ENCODE measurements at regions of chr20 and their contacts with region 1.

Region 1: DNA sequence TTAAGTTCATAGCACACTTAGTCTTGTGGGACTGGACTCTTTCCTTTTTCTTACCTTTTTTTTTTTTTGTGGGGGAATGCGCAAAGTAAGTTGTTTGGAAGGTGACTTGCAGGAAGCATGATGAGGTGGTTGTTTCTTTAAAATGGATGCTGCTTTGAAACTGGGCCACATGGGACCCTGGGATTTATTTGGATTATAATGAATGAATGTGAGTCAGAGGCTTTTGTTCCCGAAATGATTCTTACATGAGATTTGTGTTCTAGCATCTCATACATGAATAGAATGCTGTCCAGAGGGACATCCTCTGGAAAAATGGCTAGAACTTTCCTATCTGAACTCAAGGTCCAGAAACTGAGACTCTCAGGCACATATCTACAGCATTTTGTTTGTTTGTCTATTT is 236.6 kb upstream of the RNF24 start:
- DNase-seq: no peak
- H3K4me3 ChIP-seq: no peak overlapping the region
- H3K27ac ChIP-seq: no peak overlapping the region
- H3K4me1 ChIP-seq: no peaks in the 10 kb centered on the region; a peak in 1 of 7 replicates
- H3K27me3 ChIP-seq: peaks cover 14 to 42% (median 36%) of the 10 kb centered on the region in 4 experiments
- CTCF ChIP-seq: no peak
- EP300 ChIP-seq: no peak
- POLR2A ChIP-seq: no peak
- RAD21 ChIP-seq: no peak

Region 2: GRCh38 chr20:4519530-4519929 is 267.5 kb after region 1 on chr20:
- CTCF ChIA-PET with region 1: interaction called, 15 read pairs
- POLR2A ChIA-PET with region 1: no interaction called
- DNase-seq: peak in 1 of 2 experiments; percentile 84
- H3K4me3 ChIP-seq: no peak overlapping the region
- H3K27ac ChIP-seq: no peak overlapping the region
- H3K4me1 ChIP-seq: no peaks in the 10 kb centered on the region
- H3K27me3 ChIP-seq: no peaks in the 10 kb centered on the region
- CTCF ChIP-seq: peak; percentile 77 to 88 (median 82)
- EP300 ChIP-seq: no peak
- POLR2A ChIP-seq: no peak
- RAD21 ChIP-seq: peak; percentile 84 to 91

Measured in H1 (cell line).